ENCODE measurements at regions of chr3 and their contacts with region 1.

Region 1: DNA sequence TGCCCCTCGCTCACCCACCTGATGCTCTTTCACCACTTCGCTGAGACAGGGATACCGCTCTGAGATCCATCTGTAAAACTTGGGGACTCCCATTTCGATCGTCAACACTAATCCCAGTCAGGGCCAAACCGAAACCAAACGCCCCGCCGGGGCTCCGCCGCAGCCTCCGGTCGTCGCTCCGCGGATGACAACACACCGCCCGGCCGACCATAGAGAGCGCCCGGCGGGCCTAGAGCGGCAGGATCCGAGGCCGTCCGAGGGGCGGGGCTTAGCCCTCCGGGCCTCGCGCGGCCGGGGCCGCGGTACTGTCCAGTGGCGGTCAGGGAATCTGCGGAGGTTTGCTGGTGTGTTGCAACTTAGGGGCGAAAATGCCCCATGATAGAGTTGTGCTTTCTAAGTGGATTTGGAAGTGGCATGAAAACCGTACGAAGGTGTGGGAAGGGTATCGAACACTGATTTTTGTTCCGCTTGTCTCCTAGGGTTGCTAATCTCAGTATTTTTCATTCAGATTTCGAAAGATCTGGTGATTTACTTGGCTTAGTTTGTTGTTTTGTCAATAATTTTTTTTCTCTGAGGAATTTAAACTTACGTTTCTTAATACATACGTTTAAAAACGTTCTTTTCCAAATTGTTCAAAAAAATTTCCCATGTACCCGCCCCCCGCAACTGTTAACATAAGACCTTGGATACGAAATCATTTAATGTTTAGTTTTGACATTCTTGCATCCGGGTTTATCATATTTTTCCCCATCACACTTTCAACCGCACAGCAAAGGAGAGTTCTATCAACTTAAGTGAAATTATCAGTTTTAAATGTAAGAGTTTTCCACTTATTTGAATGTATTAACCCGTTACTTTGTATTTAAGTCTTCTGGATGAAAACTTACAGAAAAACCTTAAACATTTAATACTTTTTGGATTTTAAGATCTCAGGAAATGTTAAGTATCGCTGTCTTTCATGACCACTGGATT is at the start of gene XRN1:
- DNase-seq: peak; percentile 99
- H3K4me3 Mint-ChIP-seq: peak within 1 kb of the TSS; percentile 100
- H3K27ac Mint-ChIP-seq: peak within 1 kb of the TSS; percentile 99
- H3K4me1 Mint-ChIP-seq: peaks cover 25% of the 10 kb centered on the region
- H3K27me3 Mint-ChIP-seq: no peaks in the 10 kb centered on the region
- total RNA-seq, gene XRN1: 43.8 and 49.5 TPM in 2 replicates

Region 2: GRCh38 chr3:141231101-141231935 is 1216.8 kb before region 1 on chr3 and contains the start of gene PXYLP1:
- intact Hi-C with region 1: loop called (anchors 5 kb)
- DNase-seq: peak; percentile 99
- H3K4me3 Mint-ChIP-seq: peak within 1 kb of the TSS; percentile 97
- H3K27ac Mint-ChIP-seq: peak within 1 kb of the TSS; percentile 98
- H3K4me1 Mint-ChIP-seq: peaks cover 49% of the 10 kb centered on the region
- H3K27me3 Mint-ChIP-seq: peaks cover 10% of the 10 kb centered on the region
- total RNA-seq, gene PXYLP1: 10.7 and 11.7 TPM in 2 replicates

Region 3: GRCh38 chr3:141796081-141796888 is 651.9 kb before region 1 on chr3:
- intact Hi-C with region 1: loop called (anchors 5 kb)
- DNase-seq: peak; percentile 92
- H3K4me3 Mint-ChIP-seq: peak overlapping the region; percentile 84
- H3K27ac Mint-ChIP-seq: peak overlapping the region; percentile 100
- H3K4me1 Mint-ChIP-seq: peaks cover 44% of the 10 kb centered on the region
- H3K27me3 Mint-ChIP-seq: no peaks in the 10 kb centered on the region

Region 4: GRCh38 chr3:142224482-142225072 is 223.6 kb before region 1 on chr3:
- intact Hi-C with region 1: loop called (anchors 2 kb)
- DNase-seq: no peak
- H3K4me3 Mint-ChIP-seq: peak overlapping the region; percentile 95
- H3K27ac Mint-ChIP-seq: peak overlapping the region; percentile 53
- H3K4me1 Mint-ChIP-seq: peaks cover 10% of the 10 kb centered on the region
- H3K27me3 Mint-ChIP-seq: no peaks in the 10 kb centered on the region

Region 5: GRCh38 chr3:142509079-142509478 is 60.9 kb after region 1 on chr3:
- intact Hi-C with region 1: loop called (anchors 1 kb)
- DNase-seq: peak; percentile 65
- H3K4me3 Mint-ChIP-seq: peak overlapping the region; percentile 81
- H3K27ac Mint-ChIP-seq: peak overlapping the region; percentile 90
- H3K4me1 Mint-ChIP-seq: peaks cover 16% of the 10 kb centered on the region
- H3K27me3 Mint-ChIP-seq: no peaks in the 10 kb centered on the region

Region 6: DNA sequence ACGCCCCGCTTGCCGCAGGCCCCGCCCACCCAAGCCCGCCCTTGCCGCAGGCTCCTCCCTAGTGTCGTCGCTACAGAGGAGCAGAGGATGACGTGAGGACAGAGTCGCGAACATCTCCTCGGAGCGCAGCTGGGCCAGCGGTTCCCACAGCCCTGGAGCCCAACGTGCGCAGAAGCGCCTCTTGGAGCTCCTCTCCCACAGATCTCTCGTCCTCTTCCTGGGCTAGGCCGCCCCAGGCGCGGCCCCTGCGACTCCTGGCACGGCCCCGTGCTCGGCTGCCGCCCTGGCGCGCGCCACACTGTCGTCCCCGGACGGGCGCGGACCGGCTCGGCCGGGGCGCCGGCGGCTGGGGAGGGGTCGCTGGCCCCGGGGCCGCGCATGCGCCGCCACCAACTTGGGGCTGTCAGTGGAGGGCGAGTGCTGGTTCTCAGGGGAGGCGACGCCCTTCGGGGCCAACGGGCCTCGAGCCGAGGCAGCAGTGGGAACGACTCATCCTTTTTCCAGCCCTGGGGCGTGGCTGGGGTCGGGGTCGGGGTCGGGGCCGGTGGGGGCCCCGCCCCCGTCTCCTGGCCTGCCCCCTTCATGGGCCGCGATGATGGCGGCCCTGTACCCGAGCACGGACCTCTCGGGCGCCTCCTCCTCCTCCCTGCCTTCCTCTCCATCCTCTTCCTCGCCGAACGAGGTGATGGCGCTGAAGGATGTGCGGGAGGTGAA is 276.0 kb after region 1 on chr3 and contains the start of gene TRPC1:
- intact Hi-C with region 1: loop called (anchors 2 kb)
- DNase-seq: peak; percentile 92
- H3K4me3 Mint-ChIP-seq: peak within 1 kb of the TSS; percentile 89
- H3K27ac Mint-ChIP-seq: peak within 1 kb of the TSS; percentile 75
- H3K4me1 Mint-ChIP-seq: peaks cover 10% of the 10 kb centered on the region
- H3K27me3 Mint-ChIP-seq: peaks cover 63% of the 10 kb centered on the region
- total RNA-seq, gene TRPC1: 0.92 and 1.7 TPM in 2 replicates

Region 7: DNA sequence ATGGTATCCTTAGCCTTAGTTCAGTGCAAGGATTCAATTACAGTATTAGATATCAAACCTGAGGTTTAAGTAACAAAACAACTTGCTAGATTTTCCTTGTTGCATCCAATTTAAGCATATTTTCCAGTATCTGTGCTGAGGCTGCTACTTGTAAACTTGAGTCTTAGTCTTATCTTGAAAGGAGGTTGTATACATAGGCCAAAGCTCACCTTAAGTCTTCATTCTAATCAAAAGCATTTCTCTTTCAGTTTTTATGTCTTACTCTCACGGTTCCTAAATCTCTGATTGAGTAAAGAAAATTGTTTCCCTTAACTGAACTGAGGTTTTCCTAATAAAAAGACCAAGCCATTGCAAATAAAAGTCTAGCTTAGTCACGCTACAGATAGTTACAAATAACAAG is 605.9 kb after region 1 on chr3:
- intact Hi-C with region 1: no loop called
- DNase-seq: no peak
- H3K4me3 Mint-ChIP-seq: no peak overlapping the region
- H3K27ac Mint-ChIP-seq: no peak overlapping the region
- H3K4me1 Mint-ChIP-seq: peaks cover 4% of the 10 kb centered on the region
- H3K27me3 Mint-ChIP-seq: no peaks in the 10 kb centered on the region

Region 8: GRCh38 chr3:143972505-143973255 is 1524.5 kb after region 1 on chr3:
- intact Hi-C with region 1: loop called (anchors 5 kb)
- DNase-seq: peak; percentile 92
- H3K4me3 Mint-ChIP-seq: peak overlapping the region; percentile 98
- H3K27ac Mint-ChIP-seq: peak overlapping the region; percentile 96
- H3K4me1 Mint-ChIP-seq: peaks cover 35% of the 10 kb centered on the region
- H3K27me3 Mint-ChIP-seq: peaks cover 16% of the 10 kb centered on the region